ENCODE measurements at regions of chr1 and their contacts with region 1.

Region 1: GRCh38 chr1:68120136-68120791 is 69.8 kb upstream of the DIRAS3 start:
- DNase-seq: peak in 1 of 5 donors; percentile 45
- ATAC-seq: peak; percentile 34 to 69 (median 64)
- H3K4me3 ChIP-seq: no peak overlapping the region
- H3K27ac ChIP-seq: peak overlapping the region in 1 of 12 donors; percentile 39
- H3K4me1 ChIP-seq: peaks cover 0 to 11% (median 0%) of the 10 kb centered on the region in 12 donors
- H3K27me3 ChIP-seq: no peaks in the 10 kb centered on the region
- CTCF ChIP-seq: peak; percentile 75 to 90 (median 85)
- POLR2A ChIP-seq: no peak

Region 2: GRCh38 chr1:67524143-67525052 is 595.9 kb before region 1 on chr1:
- intact Hi-C with region 1: loop called in 1 of 10 experiments (anchors 10 kb)
- DNase-seq: no peak
- ATAC-seq: peak in 1 of 4 donors; percentile 22
- H3K4me3 ChIP-seq: no peak overlapping the region
- H3K27ac ChIP-seq: no peak overlapping the region
- H3K4me1 ChIP-seq: no peaks in the 10 kb centered on the region
- H3K27me3 ChIP-seq: no peaks in the 10 kb centered on the region
- CTCF ChIP-seq: peak in 1 of 12 donors; percentile 1
- POLR2A ChIP-seq: no peak

Region 3: GRCh38 chr1:67760030-67760821 is 360.0 kb before region 1 on chr1:
- intact Hi-C with region 1: loop called in 2 of 10 experiments (anchors 5 kb)
- DNase-seq: peak in 4 of 5 donors; percentile 38 to 61 (median 45)
- ATAC-seq: peak; percentile 59 to 77 (median 68)
- H3K4me3 ChIP-seq: no peak overlapping the region
- H3K27ac ChIP-seq: peak overlapping the region in 7 of 12 donors; percentile 5 to 34 (median 21)
- H3K4me1 ChIP-seq: peaks cover 0 to 32% (median 16%) of the 10 kb centered on the region in 12 donors
- H3K27me3 ChIP-seq: no peaks in the 10 kb centered on the region
- CTCF ChIP-seq: peak; percentile 83 to 95 (median 90)
- POLR2A ChIP-seq: no peak

Region 4: DNA sequence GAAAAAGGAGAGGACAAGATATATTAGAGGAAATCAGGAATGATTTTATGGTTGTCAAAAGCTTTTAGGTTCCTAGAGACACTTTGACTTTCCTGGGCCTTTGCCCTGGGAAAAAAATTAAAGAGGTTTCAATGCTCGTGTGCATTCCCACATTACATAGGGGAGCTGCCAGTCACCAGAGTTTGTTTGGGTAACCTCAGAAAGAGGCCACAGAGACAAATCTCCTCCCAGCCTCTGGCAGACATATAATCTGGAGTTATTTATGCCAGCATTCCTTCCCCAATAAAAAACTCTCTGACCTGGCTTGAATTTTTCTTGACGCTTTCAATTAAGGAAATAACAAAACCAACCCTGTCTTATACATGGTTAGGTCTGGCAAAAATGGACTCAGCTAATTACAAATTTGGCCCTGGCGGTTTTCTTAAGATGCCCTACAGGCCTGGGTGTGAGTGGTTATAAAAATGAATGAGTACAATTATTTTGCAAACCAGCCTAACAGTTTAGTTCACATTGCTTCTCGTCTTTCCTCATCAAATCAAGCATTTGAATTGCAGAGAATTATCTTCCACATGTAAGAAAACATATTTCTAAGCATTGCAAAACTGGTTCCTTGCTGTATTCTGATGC is 48.4 kb after region 1 on chr1:
- intact Hi-C with region 1: loop called in 1 of 10 experiments (anchors 5 kb)
- DNase-seq: no peak
- ATAC-seq: peak in 2 of 4 donors; percentile 36 to 55
- H3K4me3 ChIP-seq: no peak overlapping the region
- H3K27ac ChIP-seq: peak overlapping the region in 6 of 12 donors; percentile 3 to 45 (median 32)
- H3K4me1 ChIP-seq: peaks cover 0 to 45% (median 22%) of the 10 kb centered on the region in 12 donors
- H3K27me3 ChIP-seq: no peaks in the 10 kb centered on the region
- CTCF ChIP-seq: no peak
- POLR2A ChIP-seq: no peak

Region 5: DNA sequence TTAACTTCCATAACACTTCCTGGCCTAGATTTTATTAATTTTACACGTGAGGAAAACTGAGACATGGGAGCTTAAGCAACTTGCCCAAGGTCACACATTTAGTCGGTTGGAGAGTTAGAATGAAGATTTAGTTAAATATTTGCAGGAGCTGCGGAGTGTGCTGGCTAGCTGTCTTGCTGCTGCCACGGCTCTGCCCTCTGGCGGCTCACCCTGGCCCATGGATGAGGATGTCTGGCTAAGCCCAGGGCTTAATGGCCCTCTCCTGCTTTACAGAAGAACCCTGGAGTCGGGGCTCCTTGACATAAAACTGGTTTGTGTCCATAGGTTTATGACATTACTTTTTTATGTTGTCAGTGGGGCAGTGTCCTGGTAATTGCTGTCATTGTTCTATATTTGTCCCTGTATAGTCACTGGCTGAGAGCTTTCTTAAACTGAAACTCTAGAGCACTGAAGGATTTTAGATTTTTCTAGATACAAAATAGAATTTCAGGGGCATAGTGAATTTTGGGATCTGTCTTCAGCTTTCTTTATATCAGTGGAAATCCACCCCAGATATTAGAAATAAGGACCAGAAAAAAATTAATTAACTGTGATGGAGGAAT is 200.9 kb after region 1 on chr1:
- intact Hi-C with region 1: loop called (anchors 1 to 5 kb)
- DNase-seq: peak; percentile 62 to 78 (median 67)
- ATAC-seq: peak; percentile 80 to 97 (median 92)
- H3K4me3 ChIP-seq: no peak overlapping the region
- H3K27ac ChIP-seq: peak overlapping the region in 1 of 12 donors; percentile 26
- H3K4me1 ChIP-seq: no peaks in the 10 kb centered on the region
- H3K27me3 ChIP-seq: no peaks in the 10 kb centered on the region
- CTCF ChIP-seq: peak; percentile 41 to 81 (median 74)
- POLR2A ChIP-seq: no peak

Region 6: GRCh38 chr1:68346188-68346808 is 226.0 kb after region 1 on chr1:
- intact Hi-C with region 1: loop called (anchors 1 to 5 kb)
- DNase-seq: no peak
- ATAC-seq: peak in 1 of 4 donors; percentile 34
- H3K4me3 ChIP-seq: no peak overlapping the region
- H3K27ac ChIP-seq: no peak overlapping the region
- H3K4me1 ChIP-seq: peaks cover 0 to 5% (median 0%) of the 10 kb centered on the region in 12 donors
- H3K27me3 ChIP-seq: no peaks in the 10 kb centered on the region
- CTCF ChIP-seq: peak; percentile 37 to 67 (median 43)
- POLR2A ChIP-seq: no peak

Region 7: DNA sequence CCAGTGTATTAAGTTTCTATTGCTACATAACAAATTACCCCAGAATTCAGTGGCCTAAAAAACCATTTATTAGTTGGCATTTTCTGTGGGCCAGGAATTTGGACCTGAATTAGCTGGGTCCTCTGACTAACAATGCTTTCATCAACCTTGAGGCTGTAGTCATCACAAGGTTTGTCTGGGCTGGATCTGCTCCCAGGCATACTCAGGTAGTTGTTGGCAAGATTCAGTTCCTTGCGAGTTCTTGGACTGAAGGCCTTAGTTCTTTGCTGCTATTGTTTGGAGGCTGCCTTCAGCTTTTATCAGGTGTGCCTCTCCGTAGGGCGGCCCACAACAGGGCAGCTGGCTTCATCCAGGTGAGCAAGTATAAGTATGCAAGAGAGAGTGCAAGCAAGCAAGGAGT is 408.0 kb after region 1 on chr1:
- intact Hi-C with region 1: no loop called
- DNase-seq: no peak
- ATAC-seq: no peak
- H3K4me3 ChIP-seq: no peak overlapping the region
- H3K27ac ChIP-seq: no peak overlapping the region
- H3K4me1 ChIP-seq: no peaks in the 10 kb centered on the region
- H3K27me3 ChIP-seq: no peaks in the 10 kb centered on the region
- CTCF ChIP-seq: no peak
- POLR2A ChIP-seq: no peak

Region 8: DNA sequence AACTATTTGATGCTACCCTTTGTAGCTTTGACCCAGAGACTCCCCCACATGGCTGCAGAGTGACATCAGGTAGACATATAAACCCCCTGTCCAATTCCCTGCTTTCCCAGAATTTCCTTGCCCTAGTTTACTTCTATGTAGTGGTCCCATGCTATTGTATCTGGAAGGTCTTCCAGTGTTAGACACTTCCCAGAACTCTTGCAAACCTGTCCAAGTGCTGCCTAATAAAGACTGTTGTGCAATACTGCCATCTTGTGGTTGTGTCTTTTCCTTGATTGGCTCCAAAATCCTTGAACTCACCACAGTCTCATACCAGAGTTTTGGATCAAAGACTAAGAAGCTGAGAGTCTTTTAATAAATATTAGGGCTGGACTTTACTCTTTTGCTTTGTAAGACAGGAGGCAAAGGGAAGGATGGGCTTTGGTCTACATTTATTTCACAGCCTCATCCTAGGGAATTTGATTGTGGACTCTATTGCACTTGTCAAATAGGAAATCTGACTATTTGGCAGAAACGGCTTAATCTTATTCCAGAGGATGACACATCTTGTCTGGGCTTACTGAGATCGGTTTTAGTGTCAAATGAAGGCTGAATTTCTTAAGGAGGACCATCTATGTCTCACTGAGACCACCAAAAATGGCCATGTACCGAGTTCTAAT is 1617.4 kb after region 1 on chr1:
- intact Hi-C with region 1: loop called in 1 of 10 experiments (anchors 5 kb)
- DNase-seq: peak in 1 of 5 donors; percentile 13
- ATAC-seq: peak; percentile 47 to 73 (median 60)
- H3K4me3 ChIP-seq: no peak overlapping the region
- H3K27ac ChIP-seq: no peak overlapping the region
- H3K4me1 ChIP-seq: no peaks in the 10 kb centered on the region
- H3K27me3 ChIP-seq: no peaks in the 10 kb centered on the region
- CTCF ChIP-seq: peak; percentile 42 to 71 (median 62)
- POLR2A ChIP-seq: no peak